Gastrocnemius medialis (tissue), 4 donors: ENCODE measurements at regions of chr17 and their contacts with region 1.

Region 1: DNA sequence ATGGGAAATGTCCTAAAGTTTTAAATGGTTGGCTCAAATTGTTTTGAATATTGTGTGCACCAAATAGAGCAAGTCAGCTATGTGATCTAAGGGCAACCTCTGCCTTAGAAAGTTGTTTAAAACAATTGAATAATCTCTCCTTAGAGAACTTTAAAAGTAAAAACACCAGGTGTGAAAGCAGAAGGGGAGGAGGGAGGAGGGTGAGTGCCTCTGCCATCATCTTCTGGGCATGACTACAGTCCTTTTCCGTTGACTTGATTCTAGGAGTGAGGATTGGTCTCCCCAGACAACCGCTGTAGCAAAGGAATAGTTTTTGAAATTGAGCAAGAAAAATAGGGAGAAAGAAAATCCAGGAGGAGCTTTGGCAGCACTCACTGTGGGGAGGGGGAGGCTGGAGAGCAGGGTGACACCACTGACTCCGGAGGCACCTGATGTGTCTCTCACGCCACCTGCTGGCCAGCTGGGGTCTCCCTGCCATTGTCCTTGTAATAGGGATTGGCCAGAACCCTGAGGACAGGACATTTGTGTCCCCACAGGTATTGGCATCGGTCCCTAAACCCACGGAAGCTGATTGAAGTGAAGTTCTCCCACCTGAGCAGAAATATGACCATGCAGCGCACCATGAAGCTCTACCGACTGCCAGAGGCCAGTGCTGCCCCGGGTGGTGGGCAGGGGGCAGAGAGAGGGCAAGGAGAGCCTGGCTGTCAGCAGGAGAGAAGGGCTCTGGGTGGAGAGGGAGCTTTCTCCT is 33.3 kb downstream of the PLCD3 start:
- DNase-seq: peak; percentile 80 to 89
- ATAC-seq: peak; percentile 79 to 83
- H3K4me3 ChIP-seq: no peak overlapping the region
- H3K27ac ChIP-seq: peak overlapping the region; percentile 18 to 97 (median 80)
- H3K4me1 ChIP-seq: peaks cover 41 to 60% of the 10 kb centered on the region in 2 donors
- H3K27me3 ChIP-seq: no peaks in the 10 kb centered on the region
- CTCF ChIP-seq: peak; percentile 88 to 94 (median 91)
- POLR2A ChIP-seq: no peak

Region 2: DNA sequence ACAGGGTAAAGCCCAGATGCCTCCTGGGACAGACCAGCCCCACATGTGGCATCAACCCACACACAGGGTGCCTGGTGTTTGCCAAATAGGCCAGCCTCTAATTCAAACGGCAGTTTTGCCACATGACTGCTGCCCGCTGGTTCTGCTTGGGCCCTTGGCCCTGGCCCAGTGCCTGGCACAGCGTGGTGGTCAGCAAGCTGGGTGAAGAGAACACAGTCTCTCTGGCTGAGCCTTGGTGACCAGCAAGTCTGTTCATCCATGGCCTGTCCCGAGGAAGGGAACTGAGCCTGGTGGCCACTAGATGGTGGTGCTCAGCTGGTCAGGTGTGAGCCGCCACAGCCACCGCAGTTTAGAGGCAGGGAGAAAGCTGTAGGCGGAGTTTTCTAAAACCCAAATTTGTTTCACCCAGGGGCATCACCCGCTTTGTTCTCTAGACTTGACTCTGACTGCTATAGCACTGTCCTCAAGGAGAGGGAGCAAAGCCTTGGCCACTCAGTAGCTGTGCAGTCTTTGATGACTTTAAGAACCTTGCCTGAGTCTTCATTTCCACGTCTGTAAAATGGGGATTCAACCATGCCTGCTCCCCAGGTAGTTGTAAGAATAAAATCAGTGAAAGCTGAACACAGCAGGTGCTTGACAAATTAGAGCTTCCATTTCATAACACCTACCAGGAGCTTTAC is 179.0 kb before region 1 on chr17:
- in situ Hi-C with region 1: loop called in 3 of 4 experiments (anchors 5 to 25 kb)
- intact Hi-C with region 1: loop called (anchors 2 kb)
- DNase-seq: peak; percentile 66 to 73
- ATAC-seq: peak; percentile 91 to 92
- H3K4me3 ChIP-seq: no peak overlapping the region
- H3K27ac ChIP-seq: no peak overlapping the region
- H3K4me1 ChIP-seq: peaks cover 0 to 8% of the 10 kb centered on the region in 2 donors
- H3K27me3 ChIP-seq: no peaks in the 10 kb centered on the region
- CTCF ChIP-seq: peak; percentile 70 to 88 (median 81)
- POLR2A ChIP-seq: no peak

Region 3: GRCh38 chr17:45021607-45022287 is 77.3 kb before region 1 on chr17:
- in situ Hi-C with region 1: no loop called
- intact Hi-C with region 1: loop called (anchors 1 kb)
- DNase-seq: peak; percentile 23 to 47
- ATAC-seq: peak; percentile 70 to 81
- H3K4me3 ChIP-seq: peak overlapping the region; percentile 50 to 83 (median 54)
- H3K27ac ChIP-seq: peak overlapping the region; percentile 32 to 66 (median 64)
- H3K4me1 ChIP-seq: peaks cover 16 to 17% of the 10 kb centered on the region in 2 donors
- H3K27me3 ChIP-seq: no peaks in the 10 kb centered on the region
- CTCF ChIP-seq: peak; percentile 71 to 97 (median 96)
- POLR2A ChIP-seq: no peak

Region 4: DNA sequence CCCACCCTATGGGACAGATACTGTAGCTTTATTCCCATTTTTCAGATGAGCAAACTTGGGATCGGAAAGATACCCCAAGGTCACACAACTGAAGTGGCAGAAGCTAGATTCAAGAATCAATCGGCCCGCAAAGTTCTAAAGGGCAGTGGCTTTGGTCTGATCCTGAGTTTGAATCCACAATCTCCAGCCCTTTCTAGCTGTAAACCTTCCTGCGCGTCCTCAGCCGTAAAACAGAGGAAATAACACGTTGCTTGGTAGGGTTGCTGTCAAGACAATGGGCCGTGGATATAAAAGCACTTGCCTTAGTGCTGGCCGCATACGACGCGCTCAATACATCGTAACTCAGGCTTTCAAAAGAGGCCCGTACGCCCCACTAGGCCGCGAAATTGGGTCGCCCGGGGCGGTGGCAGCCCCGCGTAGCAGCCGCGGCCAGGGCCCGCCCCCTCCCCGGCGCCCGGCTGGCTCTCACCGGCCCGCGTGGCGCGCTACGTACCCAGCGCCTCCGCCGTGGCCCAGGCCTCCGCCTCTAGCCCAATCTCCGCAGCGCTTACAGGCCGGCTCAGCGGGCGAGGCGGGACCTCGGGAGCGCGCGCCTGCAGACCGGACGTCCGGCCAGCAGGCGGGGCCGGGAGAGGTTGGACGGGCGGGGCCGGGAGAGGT is 47.9 kb before region 1 on chr17 and contains the start of gene DCAKD:
- in situ Hi-C with region 1: no loop called
- intact Hi-C with region 1: loop called (anchors 2 kb)
- DNase-seq: peak; percentile 91 to 94
- ATAC-seq: peak; percentile 90 to 93
- H3K4me3 ChIP-seq: peak within 1 kb of the TSS; percentile 76 to 82 (median 78)
- H3K27ac ChIP-seq: peak within 1 kb of the TSS; percentile 94 to 97 (median 94)
- H3K4me1 ChIP-seq: peaks cover 17 to 20% of the 10 kb centered on the region in 2 donors
- H3K27me3 ChIP-seq: no peaks in the 10 kb centered on the region
- CTCF ChIP-seq: peak in 2 of 5 experiments; percentile 27 to 31
- POLR2A ChIP-seq: peak; percentile 84 to 85
- total RNA-seq, gene DCAKD: 9.8 to 14.4 (median 12.3) TPM

Region 5: DNA sequence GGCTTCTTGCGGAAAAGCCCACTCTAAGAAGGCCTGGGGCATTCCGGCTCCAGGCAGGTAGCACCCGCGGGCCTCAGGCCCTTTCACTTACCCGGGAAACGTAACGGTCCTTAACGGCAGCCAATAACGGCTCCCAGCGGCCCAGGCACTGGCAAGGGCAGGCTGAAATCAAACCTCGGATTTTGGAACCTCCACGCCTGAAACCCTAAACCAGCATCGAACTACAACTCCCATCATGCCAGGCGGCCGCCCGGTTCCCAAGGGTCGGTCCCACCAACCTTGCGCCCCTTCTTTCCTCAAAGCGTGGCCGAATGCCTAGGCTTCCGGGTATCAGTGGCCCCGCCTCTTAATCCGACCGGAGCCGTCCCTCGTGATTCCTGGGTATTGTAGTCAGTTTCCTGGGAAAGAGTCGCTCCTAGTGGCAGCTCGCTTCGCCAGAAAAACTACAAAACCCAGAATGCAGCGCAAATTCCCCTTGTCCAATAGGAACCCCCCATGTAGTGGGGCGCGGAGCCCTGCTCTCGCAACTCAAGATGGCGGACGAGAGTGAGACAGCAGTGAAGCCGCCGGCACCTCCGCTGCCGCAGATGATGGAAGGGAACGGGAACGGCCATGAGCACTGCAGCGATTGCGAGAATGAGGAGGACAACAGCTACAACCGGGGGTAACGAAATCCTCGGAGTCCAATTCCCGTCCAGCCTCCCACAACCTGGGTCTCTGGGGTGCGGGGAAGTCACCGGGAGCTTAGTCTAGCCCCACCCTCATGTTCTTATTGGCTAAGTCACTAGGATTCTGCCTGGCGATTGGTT is 38.0 kb before region 1 on chr17 and contains the start of gene NMT1:
- in situ Hi-C with region 1: no loop called
- intact Hi-C with region 1: loop called (anchors 5 kb)
- DNase-seq: peak; percentile 99 to 100
- ATAC-seq: peak; percentile 95 to 97
- H3K4me3 ChIP-seq: peak within 1 kb of the TSS; percentile 75 to 99 (median 87)
- H3K27ac ChIP-seq: peak within 1 kb of the TSS; percentile 91 to 98 (median 97)
- H3K4me1 ChIP-seq: peaks cover 36 to 49% of the 10 kb centered on the region in 2 donors
- H3K27me3 ChIP-seq: no peaks in the 10 kb centered on the region
- CTCF ChIP-seq: peak in 1 of 5 experiments; percentile 19
- POLR2A ChIP-seq: peak; percentile 91 to 98
- total RNA-seq, gene NMT1: 60.7 to 127 (median 71.5) TPM

Region 6: DNA sequence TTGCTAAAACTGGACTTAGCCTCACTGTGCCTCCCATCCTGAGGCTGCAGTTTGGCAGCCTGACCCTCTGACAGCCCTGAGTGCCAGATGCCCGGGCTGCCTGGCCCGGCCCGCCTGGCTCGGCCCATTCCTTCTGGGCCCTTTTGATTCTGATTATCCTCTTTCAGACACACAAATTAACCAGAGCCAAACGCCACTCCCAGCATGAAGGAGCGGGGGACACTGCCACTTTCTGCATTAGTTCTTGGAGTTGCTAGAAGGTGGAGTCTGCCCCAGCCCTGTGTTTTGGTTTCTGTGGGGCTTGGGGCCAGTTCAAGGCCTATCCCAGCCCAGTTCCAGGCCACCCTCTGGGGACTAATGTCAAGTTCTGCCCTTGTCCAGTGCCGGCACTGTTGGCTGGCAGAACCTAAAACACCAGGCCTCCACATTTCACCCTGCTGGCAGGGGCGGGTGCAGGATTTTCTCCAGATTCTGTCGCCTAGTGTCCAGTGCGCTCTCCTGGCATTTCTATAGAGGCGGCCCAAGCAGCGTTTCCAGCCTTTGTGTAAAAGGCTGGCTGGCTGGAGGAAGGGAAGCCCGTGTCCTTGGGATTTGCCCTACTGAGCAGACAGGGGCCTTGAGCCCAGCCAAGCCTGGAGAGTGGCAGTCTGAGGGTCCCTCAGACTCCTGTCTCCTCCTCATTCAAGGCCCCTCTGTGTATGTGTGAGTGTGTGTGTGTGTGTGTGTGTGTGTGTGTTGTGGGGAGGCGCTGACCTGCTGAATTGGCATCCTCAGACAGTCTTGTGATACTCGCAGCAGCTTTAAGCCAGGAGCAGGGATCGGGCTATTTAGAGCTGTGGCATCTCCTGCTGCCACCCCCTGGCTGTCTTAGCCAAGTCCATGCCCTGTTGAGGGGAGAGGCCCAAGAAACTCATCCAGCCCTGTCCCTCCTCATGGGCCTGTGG is 11.9 kb after region 1 on chr17:
- in situ Hi-C with region 1: no loop called
- intact Hi-C with region 1: loop called (anchors 2 kb)
- DNase-seq: peak; percentile 86 to 93
- ATAC-seq: peak; percentile 88 to 89
- H3K4me3 ChIP-seq: no peak overlapping the region
- H3K27ac ChIP-seq: peak overlapping the region; percentile 88 to 96 (median 92)
- H3K4me1 ChIP-seq: peaks cover 55 to 69% of the 10 kb centered on the region in 2 donors
- H3K27me3 ChIP-seq: no peaks in the 10 kb centered on the region
- CTCF ChIP-seq: no peak
- POLR2A ChIP-seq: no peak

Region 7: GRCh38 chr17:45247429-45248131 is 148.5 kb after region 1 on chr17:
- in situ Hi-C with region 1: no loop called
- intact Hi-C with region 1: no loop called
- DNase-seq: peak; percentile 43 to 69
- ATAC-seq: peak; percentile 47 to 60
- H3K4me3 ChIP-seq: peak overlapping the region; percentile 49 to 62 (median 56)
- H3K27ac ChIP-seq: peak overlapping the region in 1 of 4 donors; percentile 17
- H3K4me1 ChIP-seq: peaks cover 9 to 13% of the 10 kb centered on the region in 2 donors
- H3K27me3 ChIP-seq: peaks cover 0 to 13% (median 0%) of the 10 kb centered on the region in 3 donors
- CTCF ChIP-seq: no peak
- POLR2A ChIP-seq: peak in 1 of 2 donors; percentile 20